ENCODE measurements at regions of chr1 and their contacts with region 1.

Region 1: DNA sequence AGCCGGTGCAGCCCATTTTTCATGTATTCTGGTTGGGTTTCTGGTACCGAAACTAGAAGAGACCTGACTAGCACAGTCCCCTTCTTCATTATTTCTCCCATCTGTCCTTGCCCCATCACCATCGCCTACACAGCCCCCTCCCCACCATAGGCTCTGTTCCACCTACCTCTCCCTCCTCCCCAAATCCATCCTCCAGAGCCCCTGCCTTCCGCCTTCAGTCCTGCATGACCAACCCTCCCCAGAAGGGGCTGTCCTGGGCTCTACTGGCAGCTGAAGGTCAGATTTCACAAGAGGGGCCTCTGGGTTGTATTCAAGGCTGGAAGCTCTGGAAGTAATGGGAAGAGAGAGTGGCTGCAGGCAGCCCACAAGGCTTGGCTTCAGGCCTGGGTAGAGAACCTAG is 55.2 kb downstream of the SDC3 start:
- DNase-seq: no peak

Region 2: GRCh38 chr1:30823969-30824735 is 29.2 kb before region 1 on chr1:
- CTCF ChIA-PET with region 1: no interaction called
- POLR2A ChIA-PET with region 1: interaction called, 10 read pairs
- DNase-seq: peak; percentile 100

Region 3: DNA sequence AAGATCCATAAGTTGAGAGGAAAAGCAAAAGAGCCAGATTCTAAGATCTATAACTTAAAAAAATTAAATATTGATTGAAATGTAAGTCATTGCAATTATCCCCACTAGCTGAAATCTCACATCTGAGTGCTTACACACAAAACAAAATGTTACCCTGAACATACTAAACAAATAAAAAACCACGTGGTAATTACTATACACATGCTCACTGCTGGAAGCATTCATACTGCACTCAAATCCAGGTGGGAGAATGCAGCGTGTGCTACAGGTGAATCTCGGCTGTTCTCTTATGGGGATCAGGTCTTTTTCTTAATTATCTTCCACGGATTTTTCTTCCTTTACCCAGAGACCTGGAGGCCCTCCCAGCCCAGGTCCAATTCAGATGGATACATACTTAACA is 19.1 kb before region 1 on chr1:
- CTCF ChIA-PET with region 1: no interaction called
- POLR2A ChIA-PET with region 1: no interaction called
- DNase-seq: no peak

Region 4: DNA sequence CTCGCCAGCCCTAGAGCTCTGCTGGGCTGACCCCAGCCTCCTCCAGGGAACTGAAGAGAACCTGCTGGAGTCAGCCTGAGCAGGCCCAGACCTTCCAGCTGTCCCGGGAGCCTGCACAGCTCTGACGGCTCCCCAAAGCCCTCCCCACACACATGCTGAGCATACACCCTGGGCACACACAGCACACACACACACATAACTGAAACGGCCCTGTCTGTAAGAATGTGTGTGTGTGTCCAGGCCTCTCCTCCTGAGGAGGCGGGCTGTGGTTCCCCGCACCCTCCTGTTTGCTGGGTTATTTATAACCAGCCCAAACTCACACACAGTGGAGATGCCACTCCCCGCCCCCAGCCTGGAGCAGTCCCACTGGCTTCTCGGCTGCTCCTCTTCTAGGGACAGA is 35.0 kb after region 1 on chr1:
- CTCF ChIA-PET with region 1: no interaction called
- POLR2A ChIA-PET with region 1: no interaction called
- DNase-seq: no peak

Measured in HEK293T (cell line).